CD4-positive, alpha-beta T cell (primary cell): ENCODE measurements at regions of chr2 and their contacts with region 1.

Region 1: GRCh38 chr2:177239932-177240630 is 24.4 kb downstream of the NFE2L2 start:
- DNase-seq: peak in 5 of 14 experiments; percentile 26 to 79 (median 73)
- ATAC-seq: peak; percentile 75
- H3K4me3 ChIP-seq: no peak overlapping the region
- H3K4me3 Mint-ChIP-seq: peak overlapping the region; percentile 32
- H3K27ac ChIP-seq: peak overlapping the region; percentile 3 to 46
- H3K27ac Mint-ChIP-seq: peak overlapping the region; percentile 84
- H3K4me1 ChIP-seq: peaks cover 58% of the 10 kb centered on the region
- H3K4me1 Mint-ChIP-seq: peaks cover 84% of the 10 kb centered on the region
- H3K27me3 ChIP-seq: no peaks in the 10 kb centered on the region
- H3K27me3 Mint-ChIP-seq: no peaks in the 10 kb centered on the region
- CTCF ChIP-seq: no peak

Region 2: DNA sequence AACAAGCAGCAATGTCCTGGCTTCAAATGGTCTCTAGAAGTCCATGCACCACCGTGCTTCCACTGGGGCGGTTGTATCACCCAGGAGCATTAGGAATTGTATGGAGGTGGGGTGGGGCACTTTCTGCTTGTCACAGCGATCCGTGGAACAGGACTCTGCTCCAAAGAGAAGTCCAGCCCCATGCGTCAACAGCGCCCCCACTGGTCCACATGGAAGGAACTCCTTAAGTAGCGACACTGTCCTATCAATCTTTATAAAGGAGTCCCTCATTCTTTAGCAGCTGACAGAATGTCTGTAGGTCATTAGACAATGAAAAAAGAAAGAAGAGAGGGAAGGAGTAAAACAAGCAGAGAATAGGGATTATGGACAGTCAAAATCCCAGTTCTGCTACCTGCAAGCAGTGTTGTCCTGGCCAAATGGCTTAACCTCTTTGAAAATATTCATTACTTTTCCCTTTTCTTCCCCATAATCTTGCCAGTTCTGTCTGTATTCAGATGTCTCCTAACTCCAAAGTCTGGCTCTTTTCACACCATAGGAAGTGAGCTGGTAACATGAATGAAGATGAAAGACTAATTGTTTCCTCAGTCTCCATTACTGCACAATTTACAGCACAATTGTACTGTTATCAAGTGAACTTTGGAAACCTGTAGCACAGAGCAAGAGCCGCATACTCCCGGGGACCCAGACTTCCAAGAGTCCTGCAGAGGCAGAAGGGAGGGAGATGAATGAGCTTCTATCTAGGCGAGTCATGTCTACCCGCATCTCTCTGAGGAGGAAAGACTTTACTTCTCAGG is 14.5 kb after region 1 on chr2:
- CTCF ChIA-PET with region 1: interaction called, 10 read pairs
- POLR2A ChIA-PET with region 1: interaction called, 5 read pairs
- intact Hi-C with region 1: loop called (anchors 2 kb)
- DNase-seq: peak in 1 of 14 experiments; percentile 43
- ATAC-seq: no peak
- H3K4me3 ChIP-seq: no peak overlapping the region
- H3K4me3 Mint-ChIP-seq: peak overlapping the region; percentile 50
- H3K27ac ChIP-seq: no peak overlapping the region
- H3K27ac Mint-ChIP-seq: peak overlapping the region; percentile 95
- H3K4me1 ChIP-seq: peaks cover 74% of the 10 kb centered on the region
- H3K4me1 Mint-ChIP-seq: peaks cover 99% of the 10 kb centered on the region
- H3K27me3 ChIP-seq: no peaks in the 10 kb centered on the region
- H3K27me3 Mint-ChIP-seq: no peaks in the 10 kb centered on the region
- CTCF ChIP-seq: no peak